ENCODE measurements at regions of chr6 and their contacts with region 1.

Region 1: GRCh38 chr6:25263657-25264056 is 15.5 kb upstream of the CARMIL1 start:
- DNase-seq: no peak
- ATAC-seq: no peak
- H3K4me3 ChIP-seq: no peak overlapping the region
- H3K27ac ChIP-seq: no peak overlapping the region
- H3K4me1 ChIP-seq: no peaks in the 10 kb centered on the region
- H3K27me3 ChIP-seq: peaks cover 0 to 3% of the 10 kb centered on the region in 2 experiments; a peak in 1 of 4 replicates
- CTCF ChIP-seq: no peak
- EP300 ChIP-seq: no peak
- POLR2A ChIP-seq: no peak
- RAD21 ChIP-seq: no peak

Region 2: DNA sequence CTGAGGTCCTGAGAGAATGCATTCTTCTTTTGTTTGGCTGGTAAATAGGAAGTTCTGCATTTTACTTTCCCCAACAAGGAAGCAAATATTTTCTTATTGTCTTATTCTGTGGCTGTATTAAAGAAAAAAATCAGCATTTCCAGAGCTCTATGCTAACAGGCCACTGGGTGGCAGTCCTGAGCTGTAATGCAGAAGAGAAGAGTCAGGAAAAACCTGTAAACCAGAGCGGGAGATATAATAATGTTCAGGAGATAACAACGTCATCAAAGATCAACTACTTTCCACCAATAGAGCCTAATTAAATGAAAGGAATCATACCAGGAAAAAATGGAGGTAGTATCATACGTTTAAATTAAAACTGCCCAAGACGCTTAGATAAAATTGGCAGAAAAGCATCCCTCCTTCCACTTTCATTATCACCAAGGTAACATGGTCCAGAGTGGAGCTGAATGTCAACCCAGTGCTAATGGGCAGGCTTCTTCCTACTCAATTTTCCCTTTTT is 40.1 kb before region 1 on chr6:
- CTCF ChIA-PET with region 1: interaction called, 26 read pairs
- POLR2A ChIA-PET with region 1: no interaction called
- RAD21 ChIA-PET with region 1: interaction called, 15 read pairs
- SMC1A ChIA-PET with region 1: interaction called, 9 read pairs
- in situ Hi-C with region 1: no loop called
- intact Hi-C with region 1: no loop called
- DNase-seq: peak; percentile 19
- ATAC-seq: peak; percentile 81
- H3K4me3 ChIP-seq: no peak overlapping the region; the same call in 1 of the 2 replicates
- H3K27ac ChIP-seq: no peak overlapping the region
- H3K4me1 ChIP-seq: no peaks in the 10 kb centered on the region
- H3K27me3 ChIP-seq: no peaks in the 10 kb centered on the region; a peak in 1 of 4 replicates
- CTCF ChIP-seq: peak; percentile 82 to 90 (median 84)
- EP300 ChIP-seq: 0 out of 4 replicates have a peak, but pooled peaks of 1 of the 2 experiments have one; percentile 11
- POLR2A ChIP-seq: no peak
- RAD21 ChIP-seq: peak; percentile 91

Region 3: GRCh38 chr6:25497383-25498040 is 233.9 kb after region 1 on chr6:
- CTCF ChIA-PET with region 1: interaction called, 362 read pairs
- POLR2A ChIA-PET with region 1: no interaction called
- RAD21 ChIA-PET with region 1: interaction called, 133 read pairs
- SMC1A ChIA-PET with region 1: interaction called, 191 read pairs
- in situ Hi-C with region 1: no loop called
- intact Hi-C with region 1: no loop called
- DNase-seq: no peak
- ATAC-seq: no peak
- H3K4me3 ChIP-seq: no peak overlapping the region
- H3K27ac ChIP-seq: no peak overlapping the region
- H3K4me1 ChIP-seq: no peaks in the 10 kb centered on the region
- H3K27me3 ChIP-seq: no peaks in the 10 kb centered on the region
- CTCF ChIP-seq: no peak
- EP300 ChIP-seq: no peak
- POLR2A ChIP-seq: no peak
- RAD21 ChIP-seq: no peak

Region 4: GRCh38 chr6:25537349-25538018 is 273.8 kb after region 1 on chr6:
- CTCF ChIA-PET with region 1: interaction called, 11 read pairs
- POLR2A ChIA-PET with region 1: no interaction called
- RAD21 ChIA-PET with region 1: no interaction called
- SMC1A ChIA-PET with region 1: interaction called, 15 read pairs
- in situ Hi-C with region 1: no loop called
- intact Hi-C with region 1: no loop called
- DNase-seq: no peak
- ATAC-seq: no peak
- H3K4me3 ChIP-seq: no peak overlapping the region
- H3K27ac ChIP-seq: no peak overlapping the region
- H3K4me1 ChIP-seq: no peaks in the 10 kb centered on the region
- H3K27me3 ChIP-seq: no peaks in the 10 kb centered on the region
- CTCF ChIP-seq: no peak
- EP300 ChIP-seq: no peak
- POLR2A ChIP-seq: no peak
- RAD21 ChIP-seq: no peak

Region 5: DNA sequence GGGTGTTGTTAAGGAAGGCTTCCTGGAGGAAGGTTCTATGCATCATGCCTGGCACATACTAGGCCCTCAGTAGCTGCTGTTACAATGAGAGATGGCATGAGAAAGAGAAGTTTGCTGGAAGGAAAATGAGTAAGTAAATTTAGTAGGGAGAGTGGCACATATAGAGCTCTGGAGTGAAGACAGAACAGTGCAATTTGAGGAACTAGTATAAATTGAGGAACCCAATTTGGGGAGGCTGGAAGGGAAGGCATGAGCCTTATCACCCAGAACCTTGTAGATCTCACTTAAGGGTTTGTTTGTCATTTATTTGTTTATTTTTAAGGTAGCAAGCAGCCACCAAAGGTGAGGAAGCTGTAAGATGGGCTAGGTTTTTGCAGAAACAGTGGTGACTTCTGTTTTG is 301.3 kb after region 1 on chr6:
- CTCF ChIA-PET with region 1: interaction called, 151 read pairs
- POLR2A ChIA-PET with region 1: no interaction called
- RAD21 ChIA-PET with region 1: interaction called, 56 read pairs
- SMC1A ChIA-PET with region 1: interaction called, 6 read pairs
- in situ Hi-C with region 1: no loop called
- intact Hi-C with region 1: no loop called
- DNase-seq: no peak
- ATAC-seq: no peak
- H3K4me3 ChIP-seq: no peak overlapping the region
- H3K27ac ChIP-seq: no peak overlapping the region
- H3K4me1 ChIP-seq: no peaks in the 10 kb centered on the region
- H3K27me3 ChIP-seq: no peaks in the 10 kb centered on the region
- CTCF ChIP-seq: no peak
- EP300 ChIP-seq: no peak
- POLR2A ChIP-seq: no peak
- RAD21 ChIP-seq: no peak

Region 6: GRCh38 chr6:25717866-25718740 is 454.4 kb after region 1 on chr6:
- CTCF ChIA-PET with region 1: interaction called, 11 read pairs
- POLR2A ChIA-PET with region 1: no interaction called
- RAD21 ChIA-PET with region 1: interaction called, 11 read pairs
- SMC1A ChIA-PET with region 1: interaction called, 9 read pairs
- in situ Hi-C with region 1: no loop called
- intact Hi-C with region 1: no loop called
- DNase-seq: no peak
- ATAC-seq: 0 out of 3 replicates have a peak, but pooled peaks have one; percentile 34
- H3K4me3 ChIP-seq: no peak overlapping the region
- H3K27ac ChIP-seq: no peak overlapping the region
- H3K4me1 ChIP-seq: no peaks in the 10 kb centered on the region
- H3K27me3 ChIP-seq: peaks cover 0 to 3% of the 10 kb centered on the region in 2 experiments; a peak in 1 of 4 replicates
- CTCF ChIP-seq: peak; percentile 42 to 48 (median 47)
- EP300 ChIP-seq: no peak
- POLR2A ChIP-seq: no peak
- RAD21 ChIP-seq: 0 out of 2 replicates have a peak, but pooled peaks have one; percentile 32

Region 7: GRCh38 chr6:25732468-25733198 is 469.0 kb after region 1 on chr6:
- CTCF ChIA-PET with region 1: no interaction called
- POLR2A ChIA-PET with region 1: no interaction called
- RAD21 ChIA-PET with region 1: no interaction called
- SMC1A ChIA-PET with region 1: no interaction called
- in situ Hi-C with region 1: no loop called
- intact Hi-C with region 1: no loop called
- DNase-seq: no peak
- ATAC-seq: no peak
- H3K4me3 ChIP-seq: no peak overlapping the region
- H3K27ac ChIP-seq: no peak overlapping the region
- H3K4me1 ChIP-seq: no peaks in the 10 kb centered on the region
- H3K27me3 ChIP-seq: no peaks in the 10 kb centered on the region
- CTCF ChIP-seq: no peak
- EP300 ChIP-seq: no peak
- POLR2A ChIP-seq: no peak
- RAD21 ChIP-seq: no peak

Measured in GM12878 (cell line).